ENCODE measurements at regions of chr5 and their contacts with region 1.

Region 1: DNA sequence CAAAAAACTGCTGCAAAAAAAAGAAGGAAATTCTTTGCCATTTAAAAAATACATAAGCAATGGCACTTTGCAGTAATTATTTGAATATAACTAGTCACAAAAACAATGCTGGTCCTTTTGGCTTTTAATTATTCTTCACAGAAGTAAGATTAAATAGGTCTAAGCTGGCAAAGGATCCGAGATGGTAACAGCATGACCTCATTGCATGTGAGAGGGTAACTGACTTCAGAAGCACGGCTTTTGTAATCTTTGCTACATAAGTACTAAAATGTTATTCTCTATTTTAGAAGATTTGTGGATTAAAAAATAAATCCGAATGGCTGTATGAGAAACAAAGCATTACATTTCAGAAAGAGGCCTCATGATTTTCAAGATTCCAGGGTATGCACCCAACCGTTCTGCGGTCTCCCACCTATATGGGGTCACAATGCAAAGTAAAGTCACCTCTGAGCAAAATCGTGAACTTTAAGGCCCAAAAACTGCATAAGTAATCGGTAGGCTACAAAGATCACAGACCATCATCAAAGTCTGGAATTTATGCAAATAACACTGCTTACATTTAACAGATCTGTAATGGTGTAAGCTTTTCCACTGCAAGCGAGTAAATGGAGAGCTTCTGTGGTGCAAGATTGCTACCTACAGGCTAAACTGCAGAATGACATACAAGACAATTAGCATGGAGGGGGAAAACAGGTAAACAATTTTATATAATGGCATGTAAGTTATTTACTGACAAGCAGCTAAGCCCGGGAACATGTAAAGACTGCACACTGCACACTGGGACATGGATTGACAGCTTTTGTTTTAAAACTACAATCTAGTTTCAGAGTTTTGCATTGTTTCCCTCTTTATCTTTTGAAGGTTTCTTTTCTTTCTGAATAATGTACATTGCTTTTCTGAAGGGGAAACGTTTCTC is 231.6 kb downstream of the SLF1 start:
- DNase-seq: peak; percentile 43
- ATAC-seq: peak; percentile 87
- H3K4me3 Mint-ChIP-seq: no peak overlapping the region
- H3K27ac Mint-ChIP-seq: no peak overlapping the region
- H3K4me1 Mint-ChIP-seq: peaks cover 8% of the 10 kb centered on the region
- H3K27me3 Mint-ChIP-seq: no peaks in the 10 kb centered on the region

Region 2: DNA sequence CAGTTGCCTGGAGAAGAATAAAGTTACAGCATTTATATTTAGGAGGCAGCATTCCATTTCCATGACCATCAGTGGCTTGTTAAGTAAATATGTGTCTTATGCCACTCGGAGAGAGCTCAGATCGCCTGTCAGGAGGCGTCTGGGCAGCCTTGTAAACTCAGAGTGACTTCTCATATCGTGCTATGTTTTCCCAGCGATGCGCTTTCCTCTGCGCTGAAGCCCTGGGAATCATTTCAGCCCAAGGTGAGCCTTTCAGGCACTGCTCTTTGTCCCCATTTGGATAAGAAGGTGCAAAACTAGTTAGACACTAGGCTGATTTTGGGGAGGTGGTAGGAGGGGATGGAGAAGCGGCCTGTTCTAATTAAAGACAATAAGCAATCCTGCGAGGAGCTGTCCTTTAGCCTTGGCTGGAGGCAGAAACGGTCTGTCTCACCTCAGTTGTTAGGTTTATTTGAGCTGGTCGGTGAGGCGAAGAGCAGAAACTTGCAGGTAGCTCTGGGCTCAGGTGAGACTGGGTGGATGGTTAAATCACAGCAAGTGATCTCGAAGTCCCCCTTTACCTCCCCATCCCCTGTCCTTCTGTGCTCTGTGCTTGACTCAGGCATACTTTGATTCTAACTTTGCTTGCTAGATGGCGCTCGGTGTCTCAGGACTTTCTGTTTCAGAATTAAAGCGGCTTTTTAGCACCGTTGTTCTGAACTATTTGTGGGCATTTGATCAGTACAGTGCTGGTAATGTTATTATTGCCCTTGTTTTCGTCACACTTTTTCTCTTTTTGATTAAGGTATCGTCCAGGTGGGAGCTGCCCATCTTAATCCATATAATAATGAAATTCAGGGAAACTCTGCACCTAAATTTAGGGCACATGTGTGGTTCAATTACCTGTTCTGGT is 1242.5 kb before region 1 on chr5:
- CTCF ChIA-PET with region 1: interaction called, 4 read pairs
- POLR2A ChIA-PET with region 1: no interaction called
- intact Hi-C with region 1: loop called in 1 of 2 experiments (anchors 10 kb)
- DNase-seq: peak; percentile 53
- ATAC-seq: peak; percentile 81
- H3K4me3 Mint-ChIP-seq: no peak overlapping the region
- H3K27ac Mint-ChIP-seq: no peak overlapping the region
- H3K4me1 Mint-ChIP-seq: peaks cover 21% of the 10 kb centered on the region
- H3K27me3 Mint-ChIP-seq: peaks cover 82% of the 10 kb centered on the region

Region 3: GRCh38 chr5:93899026-93899600 is 951.0 kb before region 1 on chr5:
- CTCF ChIA-PET with region 1: interaction called, 4 read pairs
- POLR2A ChIA-PET with region 1: no interaction called
- intact Hi-C with region 1: loop called in 1 of 2 experiments (anchors 10 kb)
- DNase-seq: no peak
- ATAC-seq: no peak
- H3K4me3 Mint-ChIP-seq: no peak overlapping the region
- H3K27ac Mint-ChIP-seq: no peak overlapping the region
- H3K4me1 Mint-ChIP-seq: peaks cover 2% of the 10 kb centered on the region
- H3K27me3 Mint-ChIP-seq: no peaks in the 10 kb centered on the region

Region 4: GRCh38 chr5:94397508-94397907 is 452.6 kb before region 1 on chr5:
- CTCF ChIA-PET with region 1: no interaction called
- POLR2A ChIA-PET with region 1: no interaction called
- intact Hi-C with region 1: loop called in 1 of 2 experiments (anchors 5 kb)
- DNase-seq: peak; percentile 11
- ATAC-seq: no peak
- H3K4me3 Mint-ChIP-seq: no peak overlapping the region
- H3K27ac Mint-ChIP-seq: no peak overlapping the region
- H3K4me1 Mint-ChIP-seq: no peaks in the 10 kb centered on the region
- H3K27me3 Mint-ChIP-seq: no peaks in the 10 kb centered on the region

Region 5: DNA sequence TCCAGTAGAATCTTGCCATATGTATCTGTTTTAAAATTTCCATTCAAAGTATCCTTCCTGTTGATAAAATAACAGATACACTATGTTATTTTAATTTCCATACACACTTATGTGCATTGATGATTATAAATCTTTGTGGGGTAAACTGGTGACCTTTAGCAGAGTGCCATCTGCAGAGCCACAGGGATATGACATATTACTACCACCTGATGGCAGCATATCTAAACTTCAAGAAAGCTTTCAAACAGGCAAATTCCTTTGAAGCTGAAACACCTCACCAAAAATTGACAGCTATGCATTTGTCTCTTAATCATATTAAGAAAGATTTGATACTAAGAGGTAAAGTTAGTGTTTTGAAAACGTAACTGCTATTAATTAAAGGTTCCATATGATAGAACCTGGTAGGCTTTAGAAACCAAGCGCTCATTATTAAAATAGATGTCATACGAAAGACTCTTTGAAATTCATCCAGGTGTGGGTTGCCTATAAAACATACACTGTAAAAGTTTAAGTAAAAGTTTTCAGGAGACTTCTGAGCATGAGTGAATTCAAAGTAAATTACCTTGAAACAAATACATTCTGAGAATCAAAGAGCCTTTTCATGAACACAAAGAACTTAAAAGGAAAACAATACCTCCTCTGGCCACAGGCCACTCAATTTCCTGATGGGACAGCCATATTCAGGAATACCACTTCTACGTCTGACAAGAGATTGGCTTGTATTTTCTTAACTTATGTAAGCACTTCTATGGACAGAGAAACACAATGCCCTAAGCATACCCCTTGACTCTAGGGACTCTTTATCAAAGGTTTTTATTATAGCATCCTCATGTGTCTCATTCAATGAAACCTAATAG is 325.0 kb before region 1 on chr5:
- CTCF ChIA-PET with region 1: interaction called, 4 read pairs
- POLR2A ChIA-PET with region 1: no interaction called
- intact Hi-C with region 1: loop called (anchors 1 to 2 kb)
- DNase-seq: peak; percentile 20
- ATAC-seq: peak; percentile 74
- H3K4me3 Mint-ChIP-seq: no peak overlapping the region
- H3K27ac Mint-ChIP-seq: no peak overlapping the region
- H3K4me1 Mint-ChIP-seq: no peaks in the 10 kb centered on the region
- H3K27me3 Mint-ChIP-seq: no peaks in the 10 kb centered on the region

Region 6: DNA sequence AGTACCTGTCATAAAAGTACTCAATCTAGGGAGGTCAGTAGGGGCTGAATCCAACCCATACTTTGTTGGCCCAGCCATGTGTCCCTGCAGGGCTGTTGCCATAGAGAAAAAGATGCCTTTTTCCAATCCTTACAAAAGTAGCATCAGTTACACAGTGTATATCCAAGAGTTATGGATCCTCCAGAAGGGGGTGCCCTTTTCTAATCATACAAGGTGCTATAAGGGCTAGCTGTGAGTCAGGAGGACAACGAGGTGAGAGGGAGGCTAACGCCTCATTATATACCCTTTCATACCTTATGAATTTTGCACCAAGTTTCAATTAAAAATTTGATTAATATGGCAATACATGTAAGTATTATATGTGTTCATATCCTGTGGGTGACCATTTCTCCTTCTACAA is 236.5 kb before region 1 on chr5:
- CTCF ChIA-PET with region 1: interaction called, 6 read pairs
- POLR2A ChIA-PET with region 1: no interaction called
- intact Hi-C with region 1: loop called (anchors 1 to 5 kb)
- DNase-seq: no peak
- ATAC-seq: peak; percentile 20
- H3K4me3 Mint-ChIP-seq: no peak overlapping the region
- H3K27ac Mint-ChIP-seq: no peak overlapping the region
- H3K4me1 Mint-ChIP-seq: peaks cover 14% of the 10 kb centered on the region
- H3K27me3 Mint-ChIP-seq: no peaks in the 10 kb centered on the region

Region 7: GRCh38 chr5:94740286-94740685 is 109.8 kb before region 1 on chr5:
- CTCF ChIA-PET with region 1: interaction called, 8 read pairs
- POLR2A ChIA-PET with region 1: no interaction called
- intact Hi-C with region 1: loop called (anchors 1 to 5 kb)
- DNase-seq: no peak
- ATAC-seq: no peak
- H3K4me3 Mint-ChIP-seq: no peak overlapping the region
- H3K27ac Mint-ChIP-seq: no peak overlapping the region
- H3K4me1 Mint-ChIP-seq: peaks cover under 1% of the 10 kb centered on the region
- H3K27me3 Mint-ChIP-seq: no peaks in the 10 kb centered on the region

Measured in activated CD4-positive, alpha-beta T cell treated with anti-CD3 and anti-CD28 coated beads for 36 hours (primary cell).